Caco-2 (cell line): ENCODE measurements at regions of chr3 and their contacts with region 1.

Region 1: GRCh38 chr3:146277953-146278631 is 27.2 kb upstream of the PLSCR4 start:
- DNase-seq: no peak
- H3K4me3 ChIP-seq: no peak overlapping the region
- H3K4me3 Mint-ChIP-seq: no peak overlapping the region
- H3K27ac Mint-ChIP-seq: no peak overlapping the region
- H3K4me1 ChIP-seq: peaks cover 12% of the 10 kb centered on the region
- H3K4me1 Mint-ChIP-seq: peaks cover 9% of the 10 kb centered on the region
- H3K27me3 ChIP-seq: no peaks in the 10 kb centered on the region
- H3K27me3 Mint-ChIP-seq: no peaks in the 10 kb centered on the region
- CTCF ChIP-seq: no peak

Region 2: GRCh38 chr3:146262371-146263110 is 15.6 kb before region 1 on chr3:
- CTCF ChIA-PET with region 1: no interaction called
- POLR2A ChIA-PET with region 1: no interaction called
- intact Hi-C with region 1: loop called (anchors 2 kb)
- DNase-seq: no peak
- H3K4me3 ChIP-seq: no peak overlapping the region
- H3K4me3 Mint-ChIP-seq: no peak overlapping the region
- H3K27ac Mint-ChIP-seq: no peak overlapping the region
- H3K4me1 ChIP-seq: 0 out of 2 replicates have a peak, but pooled peaks cover 5% of the 10 kb centered on the region
- H3K4me1 Mint-ChIP-seq: peaks cover 15% of the 10 kb centered on the region
- H3K27me3 ChIP-seq: no peaks in the 10 kb centered on the region
- H3K27me3 Mint-ChIP-seq: no peaks in the 10 kb centered on the region
- CTCF ChIP-seq: no peak

Region 3: DNA sequence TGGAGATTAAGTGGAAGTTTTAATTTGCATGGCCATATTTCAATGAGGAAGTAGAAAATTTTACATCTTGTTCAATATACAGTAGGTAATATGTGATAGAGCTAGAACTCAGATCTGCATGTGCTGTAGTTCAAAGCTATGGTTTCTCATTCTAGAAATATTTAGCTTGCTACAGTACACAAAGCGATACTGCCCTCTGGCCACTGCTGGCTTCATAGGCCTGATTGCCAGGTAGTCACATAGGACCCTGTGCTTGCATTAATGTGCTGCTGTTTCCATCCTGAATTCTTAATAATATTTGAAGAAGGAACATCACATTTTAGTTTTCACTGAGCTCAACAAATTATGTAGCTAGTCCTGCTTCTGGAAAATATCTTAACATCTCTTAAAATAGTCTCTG is 104.3 kb after region 1 on chr3:
- CTCF ChIA-PET with region 1: no interaction called
- POLR2A ChIA-PET with region 1: no interaction called
- intact Hi-C with region 1: loop called (anchors 5 kb)
- DNase-seq: peak; percentile 34 to 45
- H3K4me3 ChIP-seq: no peak overlapping the region
- H3K4me3 Mint-ChIP-seq: no peak overlapping the region
- H3K27ac Mint-ChIP-seq: no peak overlapping the region
- H3K4me1 ChIP-seq: no peaks in the 10 kb centered on the region
- H3K4me1 Mint-ChIP-seq: peaks cover 7% of the 10 kb centered on the region
- H3K27me3 ChIP-seq: no peaks in the 10 kb centered on the region
- H3K27me3 Mint-ChIP-seq: no peaks in the 10 kb centered on the region
- CTCF ChIP-seq: peak; percentile 35 to 66

Region 4: DNA sequence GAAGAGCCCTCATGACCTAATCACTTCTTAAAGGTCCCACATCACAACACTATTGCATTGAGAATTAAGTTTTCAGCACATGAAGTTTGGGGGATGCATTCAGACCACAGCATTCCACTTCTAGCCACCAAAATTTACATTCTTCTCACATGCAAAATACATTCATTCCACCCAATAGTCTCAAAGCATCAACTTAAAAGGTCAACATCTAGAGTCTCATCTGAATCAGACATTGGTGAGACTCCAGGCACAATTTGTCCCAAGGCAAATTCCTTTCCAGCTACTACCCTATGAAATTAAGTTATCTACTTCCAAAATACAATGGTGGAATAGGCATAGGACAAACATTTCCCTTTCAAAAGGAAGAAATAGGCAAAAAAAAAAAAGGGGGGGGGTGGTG is 126.3 kb after region 1 on chr3:
- CTCF ChIA-PET with region 1: no interaction called
- POLR2A ChIA-PET with region 1: no interaction called
- intact Hi-C with region 1: no loop called
- DNase-seq: no peak
- H3K4me3 ChIP-seq: no peak overlapping the region
- H3K4me3 Mint-ChIP-seq: no peak overlapping the region
- H3K27ac Mint-ChIP-seq: no peak overlapping the region
- H3K4me1 ChIP-seq: no peaks in the 10 kb centered on the region
- H3K4me1 Mint-ChIP-seq: peaks cover 6% of the 10 kb centered on the region
- H3K27me3 ChIP-seq: no peaks in the 10 kb centered on the region
- H3K27me3 Mint-ChIP-seq: no peaks in the 10 kb centered on the region
- CTCF ChIP-seq: no peak